ENCODE measurements at regions of chr18 and their contacts with region 1.

Region 1: GRCh38 chr18:824179-824578 is 12.1 kb upstream of the YES1 start:
- DNase-seq: no peak
- H3K4me3 ChIP-seq: no peak overlapping the region
- H3K27ac ChIP-seq: no peak overlapping the region
- H3K4me1 ChIP-seq: peaks cover 0 to 9% (median 3%) of the 10 kb centered on the region in 4 experiments
- H3K27me3 ChIP-seq: no peaks in the 10 kb centered on the region

Region 2: GRCh38 chr18:741931-742512 is 82.2 kb before region 1 on chr18:
- CTCF ChIA-PET with region 1: interaction called, 179 read pairs
- POLR2A ChIA-PET with region 1: no interaction called
- DNase-seq: peak; percentile 59 to 82 (median 79)
- H3K4me3 ChIP-seq: no peak overlapping the region
- H3K27ac ChIP-seq: no peak overlapping the region
- H3K4me1 ChIP-seq: no peaks in the 10 kb centered on the region
- H3K27me3 ChIP-seq: no peaks in the 10 kb centered on the region

Region 3: GRCh38 chr18:812376-813171 is 11.6 kb before region 1 on chr18:
- CTCF ChIA-PET with region 1: interaction called, 55 read pairs
- POLR2A ChIA-PET with region 1: no interaction called
- DNase-seq: peak; percentile 91 to 95 (median 94)
- H3K4me3 ChIP-seq: peak overlapping the region; percentile 85 to 97 (median 92)
- H3K27ac ChIP-seq: peak overlapping the region; percentile 73 to 93
- H3K4me1 ChIP-seq: peaks cover 15 to 71% (median 40%) of the 10 kb centered on the region in 4 experiments
- H3K27me3 ChIP-seq: no peaks in the 10 kb centered on the region

Measured in common myeloid progenitor, CD34-positive (primary cell).